ENCODE measurements at regions of chr2 and their contacts with region 1.

Region 1: DNA sequence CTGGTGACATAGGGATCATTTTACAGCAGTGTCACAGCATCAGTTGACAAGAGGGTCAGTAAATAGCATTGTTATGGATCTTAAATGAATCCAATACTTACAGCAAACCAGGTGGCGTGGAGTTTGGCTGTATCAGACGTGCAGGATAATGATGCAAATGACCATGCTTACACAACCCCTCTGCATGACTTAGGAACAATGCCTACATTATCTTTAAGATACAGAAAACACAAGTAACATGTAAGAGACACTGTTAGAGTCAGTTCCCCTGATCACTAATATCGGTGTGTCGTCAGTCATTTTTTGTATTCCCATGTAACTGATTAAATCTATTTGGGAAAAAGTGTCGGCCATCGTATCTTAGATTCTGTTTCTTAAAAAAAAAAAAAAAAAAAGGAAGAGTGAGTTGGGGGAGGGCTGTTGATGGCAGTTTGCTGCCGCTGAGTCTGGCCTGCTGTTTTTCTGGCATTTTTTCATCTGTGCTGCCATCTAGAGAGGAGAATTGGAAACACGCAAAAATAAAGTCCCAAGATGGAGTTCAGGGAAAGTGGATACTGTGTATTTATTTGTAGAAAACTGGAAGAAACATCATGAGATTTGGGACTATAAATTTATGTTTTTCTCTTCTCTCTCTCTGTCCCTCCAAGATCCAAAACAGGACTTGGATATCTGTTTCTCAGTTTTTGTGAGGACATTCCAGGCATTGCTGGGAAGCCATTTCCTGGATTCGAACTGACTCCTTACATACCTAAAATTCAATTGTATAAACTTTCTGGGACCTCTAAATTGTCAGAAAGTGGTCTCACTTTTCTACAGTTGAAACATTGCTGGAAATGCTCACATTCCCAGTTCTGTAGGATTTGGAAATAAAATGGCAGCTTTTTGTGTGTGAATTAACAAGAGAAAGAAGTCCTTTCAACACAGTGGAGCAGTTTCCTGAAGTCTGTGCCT is 60.3 kb upstream of the AGPS start:
- DNase-seq: peak in 4 of 5 donors; percentile 35 to 58 (median 50)
- ATAC-seq: peak; percentile 48 to 88 (median 82)
- H3K4me3 ChIP-seq: peak overlapping the region in 6 of 12 donors; percentile 14 to 36 (median 24)
- H3K27ac ChIP-seq: peak overlapping the region in 4 of 12 donors; percentile 25 to 66 (median 34)
- H3K4me1 ChIP-seq: peaks cover 0 to 15% (median 4%) of the 10 kb centered on the region in 12 donors
- H3K27me3 ChIP-seq: no peaks in the 10 kb centered on the region
- CTCF ChIP-seq: peak; percentile 45 to 75 (median 68)
- POLR2A ChIP-seq: no peak

Region 2: DNA sequence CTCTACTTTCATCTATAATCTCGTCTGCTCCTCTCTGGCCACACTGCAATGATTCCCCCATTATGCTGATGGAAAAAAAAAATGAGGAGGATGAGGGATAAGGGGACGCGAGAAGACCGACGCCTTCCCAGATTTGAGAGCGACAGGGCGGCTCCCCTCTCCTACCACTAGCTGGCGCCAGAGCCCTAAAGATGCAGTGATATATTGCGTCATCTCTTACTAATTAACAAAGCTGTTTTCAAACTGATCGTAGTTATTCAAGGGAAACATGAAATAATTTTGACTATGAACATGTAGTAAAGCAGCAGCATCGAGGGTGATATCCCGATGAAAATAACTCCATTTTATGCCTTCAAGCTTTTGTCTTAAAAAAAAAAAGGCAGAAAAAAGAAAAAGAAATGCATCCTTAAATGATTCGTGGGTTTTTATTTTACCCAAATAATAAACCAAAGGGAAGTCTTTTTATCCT is 167.7 kb before region 1 on chr2:
- intact Hi-C with region 1: loop called (anchors 1 to 2 kb)
- DNase-seq: peak; percentile 78 to 89 (median 81)
- ATAC-seq: peak; percentile 86 to 93 (median 89)
- H3K4me3 ChIP-seq: peak overlapping the region in 11 of 12 donors; percentile 23 to 64 (median 47)
- H3K27ac ChIP-seq: peak overlapping the region; percentile 80 to 93 (median 85)
- H3K4me1 ChIP-seq: peaks cover 5 to 28% (median 17%) of the 10 kb centered on the region in 12 donors
- H3K27me3 ChIP-seq: no peaks in the 10 kb centered on the region
- CTCF ChIP-seq: peak; percentile 99 to 100 (median 100)
- POLR2A ChIP-seq: no peak

Region 3: GRCh38 chr2:177281400-177282180 is 50.7 kb before region 1 on chr2:
- intact Hi-C with region 1: loop called in 1 of 10 experiments (anchors 5 kb)
- DNase-seq: peak in 1 of 5 donors; percentile 39
- ATAC-seq: peak; percentile 8 to 63 (median 22)
- H3K4me3 ChIP-seq: no peak overlapping the region
- H3K27ac ChIP-seq: peak overlapping the region in 5 of 12 donors; percentile 1 to 71 (median 44)
- H3K4me1 ChIP-seq: peaks cover 0 to 54% (median 23%) of the 10 kb centered on the region in 12 donors
- H3K27me3 ChIP-seq: no peaks in the 10 kb centered on the region
- CTCF ChIP-seq: no peak
- POLR2A ChIP-seq: no peak

Region 4: GRCh38 chr2:177419274-177419673 is 87.0 kb after region 1 on chr2:
- intact Hi-C with region 1: loop called in 9 of 10 experiments (anchors 1 to 5 kb)
- DNase-seq: no peak
- ATAC-seq: no peak
- H3K4me3 ChIP-seq: no peak overlapping the region
- H3K27ac ChIP-seq: no peak overlapping the region
- H3K4me1 ChIP-seq: peaks cover 0 to 47% (median 2%) of the 10 kb centered on the region in 12 donors
- H3K27me3 ChIP-seq: no peaks in the 10 kb centered on the region
- CTCF ChIP-seq: no peak
- POLR2A ChIP-seq: no peak

Region 5: GRCh38 chr2:177598326-177599138 is 266.2 kb after region 1 on chr2:
- intact Hi-C with region 1: loop called in 9 of 10 experiments (anchors 5 to 10 kb)
- DNase-seq: peak in 3 of 5 donors; percentile 54 to 59 (median 56)
- ATAC-seq: peak; percentile 57 to 87 (median 78)
- H3K4me3 ChIP-seq: peak overlapping the region in 2 of 12 donors; percentile 27 to 31
- H3K27ac ChIP-seq: peak overlapping the region in 7 of 12 donors; percentile 10 to 51 (median 22)
- H3K4me1 ChIP-seq: peaks cover 3 to 22% (median 19%) of the 10 kb centered on the region in 12 donors
- H3K27me3 ChIP-seq: no peaks in the 10 kb centered on the region
- CTCF ChIP-seq: peak in 2 of 12 donors; percentile 23 to 36
- POLR2A ChIP-seq: no peak

Region 6: DNA sequence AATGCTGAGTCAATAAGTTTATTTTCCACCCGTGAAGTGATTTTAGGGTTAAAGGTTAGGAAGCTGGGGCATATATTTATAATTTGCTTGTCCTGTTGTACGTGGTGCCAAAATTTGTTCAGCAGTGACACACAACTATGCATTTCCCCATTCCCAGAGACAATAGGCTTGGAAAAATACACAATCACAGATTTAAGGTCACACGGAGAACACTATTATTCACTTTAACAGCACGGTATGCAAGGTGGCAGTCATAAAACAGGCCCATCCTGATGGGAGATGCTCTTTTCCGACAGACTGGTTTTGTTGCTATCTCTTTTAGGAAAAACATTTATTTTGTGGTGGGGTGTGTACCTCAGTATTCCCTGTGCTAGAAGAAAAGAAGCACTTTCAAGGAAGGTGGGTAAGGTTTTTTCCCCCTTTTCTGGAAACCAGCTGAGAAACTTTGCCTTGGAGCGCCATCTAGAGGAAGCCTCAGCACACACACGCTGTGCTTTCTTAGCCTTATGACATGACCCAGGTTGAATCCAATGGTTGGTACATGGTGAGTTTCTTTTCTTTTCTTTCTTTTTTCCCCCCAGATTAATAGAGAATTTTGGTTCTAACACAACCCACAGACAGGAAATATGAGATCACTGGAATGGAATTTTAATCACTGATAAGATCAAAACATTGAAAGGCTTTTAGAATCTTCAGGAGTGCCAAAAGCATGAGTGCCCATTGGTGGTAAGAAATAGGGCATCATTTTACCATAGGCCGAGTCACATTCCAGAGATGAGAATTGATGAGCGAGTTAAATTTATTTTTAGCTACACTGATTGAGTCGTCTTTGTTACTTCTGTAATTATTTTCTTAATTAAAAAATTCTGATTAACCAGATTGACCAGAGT is 392.3 kb after region 1 on chr2:
- intact Hi-C with region 1: loop called in 9 of 10 experiments (anchors 1 to 10 kb)
- DNase-seq: peak in 3 of 5 donors; percentile 36 to 53 (median 40)
- ATAC-seq: peak; percentile 64 to 83 (median 74)
- H3K4me3 ChIP-seq: no peak overlapping the region
- H3K27ac ChIP-seq: peak overlapping the region in 2 of 12 donors; percentile 3 to 24
- H3K4me1 ChIP-seq: peaks cover 0 to 9% (median 0%) of the 10 kb centered on the region in 12 donors
- H3K27me3 ChIP-seq: peaks cover 0 to 5% (median 0%) of the 10 kb centered on the region in 9 donors
- CTCF ChIP-seq: peak; percentile 80 to 95 (median 86)
- POLR2A ChIP-seq: no peak

Region 7: DNA sequence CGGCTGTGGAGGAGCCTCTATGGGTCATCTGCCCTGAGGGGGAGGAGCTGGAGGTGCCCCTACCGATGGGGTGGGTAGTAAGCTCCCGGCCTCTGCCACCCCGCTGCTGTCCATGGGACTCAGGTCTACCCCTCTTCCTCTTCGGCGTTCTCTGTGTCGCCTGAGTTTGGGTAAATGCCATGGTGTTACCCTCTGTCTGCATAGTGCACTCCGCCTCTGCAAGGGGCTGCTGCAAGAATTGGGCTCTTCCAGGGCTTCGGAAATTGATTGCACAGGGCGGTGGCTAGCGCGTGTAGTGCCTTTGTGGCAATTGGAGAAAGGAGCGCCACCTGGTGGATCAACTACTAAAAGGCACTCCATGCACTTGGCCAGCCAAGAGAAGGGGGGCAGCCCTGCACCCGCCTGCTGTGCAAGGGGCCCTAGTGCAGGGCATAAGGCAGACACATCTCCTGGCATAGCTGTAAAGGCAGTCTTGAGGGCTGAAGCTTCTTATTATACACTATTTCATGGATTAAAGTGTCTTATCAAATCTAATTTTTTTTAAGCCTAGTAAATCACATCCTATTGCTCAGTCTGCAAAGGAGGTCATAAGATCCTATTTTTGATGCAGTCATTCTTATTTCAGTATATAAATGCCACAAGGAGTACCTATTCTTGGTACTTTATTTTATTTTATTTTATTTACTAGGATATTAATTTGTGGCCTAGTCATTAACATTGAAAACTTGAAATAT is 431.4 kb after region 1 on chr2:
- intact Hi-C with region 1: loop called (anchors 2 to 10 kb)
- DNase-seq: peak; percentile 70 to 81 (median 74)
- ATAC-seq: peak; percentile 49 to 89 (median 86)
- H3K4me3 ChIP-seq: peak overlapping the region in 1 of 12 donors; percentile 24
- H3K27ac ChIP-seq: no peak overlapping the region
- H3K4me1 ChIP-seq: peaks cover 0 to 15% (median 2%) of the 10 kb centered on the region in 12 donors
- H3K27me3 ChIP-seq: no peaks in the 10 kb centered on the region
- CTCF ChIP-seq: peak; percentile 74 to 90 (median 82)
- POLR2A ChIP-seq: no peak

Measured in heart left ventricle (tissue), 16 donors.